Testis (tissue), 5 donors: ENCODE measurements at regions of chr14 and their contacts with region 1.

Region 1: GRCh38 chr14:54691525-54692283 is 124.8 kb downstream of the SAMD4A start:
- DNase-seq: peak; percentile 84
- H3K4me3 ChIP-seq: no peak overlapping the region
- H3K27ac ChIP-seq: peak overlapping the region in 1 of 2 donors; percentile 62
- H3K4me1 ChIP-seq: peaks cover 6% of the 10 kb centered on the region
- H3K27me3 ChIP-seq: no peaks in the 10 kb centered on the region
- CTCF ChIP-seq: peak; percentile 33 to 73 (median 68)
- POLR2A ChIP-seq: no peak

Region 2: DNA sequence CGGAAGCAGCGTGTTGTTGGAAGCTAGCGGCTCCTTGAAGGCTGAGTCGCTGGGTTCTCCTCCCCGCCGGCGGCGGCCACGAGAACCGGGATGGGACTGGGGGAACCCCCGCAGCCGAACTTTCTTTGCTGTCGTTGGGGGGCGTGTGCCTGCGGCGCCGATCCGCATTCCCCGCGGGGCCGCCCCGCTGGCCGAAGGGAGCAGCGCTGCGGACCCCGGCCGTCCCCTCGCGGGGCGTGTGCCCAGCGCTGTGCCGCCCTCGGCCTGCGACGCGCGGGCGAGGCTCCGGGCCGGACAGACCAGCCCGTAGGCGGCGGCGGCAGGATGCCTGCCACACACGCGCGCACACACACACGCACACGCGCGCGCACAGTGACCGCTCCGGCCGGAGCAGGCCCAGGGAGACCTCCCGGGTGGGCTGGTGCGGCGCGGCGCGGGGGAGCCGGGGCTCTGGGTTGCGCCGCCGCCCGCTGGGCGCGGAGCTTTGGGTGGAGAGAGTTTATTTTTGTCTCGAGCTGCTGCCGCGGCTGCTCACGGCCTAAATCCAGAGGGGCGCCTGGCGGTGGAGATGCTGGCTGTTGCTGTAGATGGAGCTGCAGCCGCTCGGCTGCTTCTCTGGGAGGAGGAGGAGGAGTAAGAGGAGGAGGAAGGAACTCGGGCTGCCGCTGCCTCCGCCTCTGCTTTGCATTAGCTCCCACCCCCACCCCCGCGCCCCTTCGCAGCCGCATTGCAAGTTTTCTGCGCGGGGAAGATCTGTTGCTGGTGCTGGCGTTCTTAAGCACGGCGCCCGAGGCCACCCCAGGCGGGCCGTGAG is 125.1 kb before region 1 on chr14 and contains the start of gene SAMD4A:
- intact Hi-C with region 1: loop called (anchors 5 kb)
- DNase-seq: peak; percentile 77
- H3K4me3 ChIP-seq: peak within 1 kb of the TSS; percentile 73 to 82
- H3K27ac ChIP-seq: peak within 1 kb of the TSS; percentile 81 to 98
- H3K4me1 ChIP-seq: peaks cover 5% of the 10 kb centered on the region
- H3K27me3 ChIP-seq: no peaks in the 10 kb centered on the region
- CTCF ChIP-seq: peak in 2 of 3 experiments; percentile 9 to 29
- POLR2A ChIP-seq: no peak
- total RNA-seq, gene SAMD4A: 103 to 259 TPM

Region 3: GRCh38 chr14:54773171-54773975 is 81.7 kb after region 1 on chr14:
- intact Hi-C with region 1: loop called (anchors 5 kb)
- DNase-seq: peak; percentile 74
- H3K4me3 ChIP-seq: no peak overlapping the region
- H3K27ac ChIP-seq: peak overlapping the region; percentile 27 to 88
- H3K4me1 ChIP-seq: peaks cover 11% of the 10 kb centered on the region
- H3K27me3 ChIP-seq: no peaks in the 10 kb centered on the region
- CTCF ChIP-seq: peak; percentile 51 to 82 (median 81)
- POLR2A ChIP-seq: no peak

Region 4: DNA sequence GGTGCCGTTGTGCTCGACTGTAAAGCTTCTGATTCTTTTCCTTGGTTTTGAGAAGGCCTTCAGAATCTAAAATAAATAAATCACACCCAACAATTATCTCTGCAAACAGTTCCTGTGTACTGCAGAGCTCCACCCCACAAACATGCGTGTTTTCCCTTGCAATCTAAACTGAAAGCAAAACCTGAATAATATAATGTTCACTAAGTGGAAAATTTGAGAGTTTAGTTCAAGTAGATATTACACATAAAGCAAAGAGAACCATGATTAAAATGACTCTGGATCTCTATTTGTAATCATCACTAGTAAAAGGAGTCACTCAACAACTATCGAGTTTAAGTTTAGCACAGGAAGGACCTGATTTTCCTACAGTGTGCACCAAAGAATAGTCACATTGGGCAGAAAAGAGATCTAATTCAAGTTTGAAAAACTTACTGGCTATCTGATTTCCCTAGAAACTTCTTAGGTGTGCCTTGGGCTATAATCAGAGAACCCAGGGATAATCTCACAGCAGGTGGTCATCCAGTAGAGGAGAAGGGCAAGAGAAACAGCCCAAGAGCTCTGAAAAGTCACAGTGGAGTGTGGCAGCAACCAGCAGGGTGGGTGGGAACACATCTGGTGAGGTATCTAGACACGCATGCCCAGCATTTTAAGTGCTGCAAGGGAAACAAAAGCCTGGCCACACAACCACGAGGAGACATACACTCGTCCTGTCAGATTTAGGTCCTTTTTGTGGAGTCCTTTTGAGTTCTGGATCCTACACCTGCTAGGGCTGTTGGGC is 694.5 kb after region 1 on chr14:
- intact Hi-C with region 1: no loop called
- DNase-seq: no peak
- H3K4me3 ChIP-seq: no peak overlapping the region
- H3K27ac ChIP-seq: no peak overlapping the region
- H3K4me1 ChIP-seq: no peaks in the 10 kb centered on the region
- H3K27me3 ChIP-seq: no peaks in the 10 kb centered on the region
- CTCF ChIP-seq: no peak
- POLR2A ChIP-seq: no peak